HEK293T (cell line): ENCODE measurements at regions of chr14 and their contacts with region 1.

Region 1: DNA sequence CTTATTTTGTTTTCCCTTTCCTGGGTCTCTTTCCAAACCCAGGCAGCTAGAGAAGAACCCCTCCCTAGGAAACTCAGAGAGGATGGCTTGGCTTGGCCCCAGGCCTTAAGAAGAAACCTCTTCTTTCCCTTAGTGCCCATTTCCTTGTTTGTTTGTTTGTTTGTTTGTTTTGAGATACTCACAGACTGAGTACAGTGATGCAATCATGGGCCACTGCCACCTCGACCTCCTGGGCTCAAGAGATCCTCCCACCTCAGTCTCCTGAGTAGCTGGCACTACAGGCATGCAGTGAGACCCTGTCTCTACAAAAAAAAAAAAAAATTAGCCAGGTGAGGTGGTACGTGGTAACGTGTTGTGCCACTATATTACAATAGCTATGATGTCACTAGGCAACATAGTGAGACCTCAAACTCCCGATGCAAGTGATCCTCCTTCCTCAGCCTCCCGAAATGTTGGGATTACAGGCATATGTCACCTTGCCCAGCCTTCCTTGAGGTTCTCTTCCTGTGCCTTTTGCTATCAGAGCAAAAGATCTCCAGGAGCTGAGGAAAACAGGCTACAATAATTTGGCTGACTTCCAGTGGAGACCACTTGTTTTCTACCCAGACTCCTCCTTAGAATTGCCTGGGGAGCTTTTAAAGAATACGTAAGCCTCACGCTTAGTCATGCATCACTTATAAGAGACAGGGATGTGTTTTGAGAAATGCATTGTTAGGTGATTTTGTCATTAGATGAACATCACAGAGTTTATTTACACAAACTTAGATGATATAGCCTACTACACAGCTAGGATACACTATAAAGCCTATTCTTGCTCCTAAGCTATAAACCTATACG is 34.5 kb upstream of the LGALS3 start:
- DNase-seq: no peak

Region 2: DNA sequence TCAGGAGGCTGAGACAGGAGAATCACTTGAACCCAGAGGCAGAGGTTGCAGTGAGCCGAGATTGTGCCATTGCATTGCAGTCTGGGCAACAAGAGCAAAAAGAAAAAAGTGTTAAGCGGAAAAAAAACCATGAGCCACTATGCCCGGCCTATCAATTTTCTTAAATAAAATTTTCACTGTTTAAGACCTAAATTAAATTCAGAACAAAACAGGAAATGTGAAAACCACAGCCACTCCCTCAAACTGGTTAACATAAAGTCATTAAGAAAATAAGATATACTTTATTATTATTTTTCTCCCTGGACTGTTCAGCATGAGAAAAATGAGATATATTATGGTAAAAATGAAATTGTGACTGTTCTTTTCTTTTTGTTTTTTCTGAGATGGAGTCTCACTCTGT is 147.3 kb before region 1 on chr14:
- CTCF ChIA-PET with region 1: no interaction called
- POLR2A ChIA-PET with region 1: no interaction called
- DNase-seq: no peak

Region 3: DNA sequence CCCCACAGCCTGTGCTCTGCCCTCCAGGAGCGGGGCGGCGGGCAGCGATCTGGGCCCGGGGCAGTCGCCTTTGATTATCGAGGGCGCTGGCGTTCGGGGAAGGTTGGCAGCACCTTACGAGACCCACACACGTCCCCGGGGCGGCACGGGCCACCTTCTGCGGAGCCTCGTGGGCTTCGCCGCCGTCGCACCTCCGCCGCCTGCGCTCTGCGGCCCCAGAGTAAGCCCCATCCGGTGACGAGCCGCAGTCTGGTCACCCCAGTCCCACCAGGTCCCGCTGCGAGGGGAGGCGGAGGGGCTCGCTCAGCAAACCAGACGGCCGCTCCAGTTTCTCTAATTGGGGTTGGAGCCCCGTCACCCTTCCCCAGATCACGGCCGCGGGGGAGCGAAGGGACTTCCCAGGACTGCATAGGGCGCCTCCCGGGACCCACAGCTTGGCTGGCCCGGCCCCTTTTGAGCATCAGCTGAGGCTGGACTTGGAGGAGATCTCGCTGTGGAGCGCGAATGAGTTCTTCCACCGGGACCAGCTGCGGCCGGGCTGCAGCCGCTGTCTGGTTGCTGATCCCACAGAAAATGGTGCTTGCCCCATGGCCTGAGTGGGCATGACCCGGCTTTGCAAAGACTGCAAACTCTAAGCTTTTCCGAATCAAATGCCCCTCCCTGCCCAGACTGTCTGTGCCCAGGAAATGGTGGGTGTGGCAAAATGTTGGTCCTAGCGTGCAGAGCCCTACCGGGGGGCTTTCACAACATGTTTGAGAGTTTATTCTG is 35.1 kb after region 1 on chr14:
- CTCF ChIA-PET with region 1: no interaction called
- POLR2A ChIA-PET with region 1: no interaction called
- DNase-seq: no peak

Region 4: DNA sequence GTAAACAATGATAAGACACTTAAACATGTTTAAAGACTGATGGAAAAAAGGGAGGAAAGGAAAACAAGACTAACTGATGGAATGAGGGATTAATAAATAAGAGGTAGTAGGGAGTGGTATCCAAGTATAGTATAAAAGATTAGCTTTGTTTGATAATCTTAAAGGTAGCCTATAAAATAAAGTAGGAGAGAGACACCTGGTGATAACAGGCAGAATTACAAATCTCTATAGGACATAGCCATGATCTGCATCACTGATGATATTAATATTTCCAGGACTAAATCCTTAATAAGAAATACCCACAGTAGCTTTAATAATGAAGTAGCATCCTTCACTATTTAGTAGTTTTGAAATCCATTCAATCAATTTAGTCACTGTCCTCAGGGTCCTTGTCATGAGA is 66.5 kb after region 1 on chr14:
- CTCF ChIA-PET with region 1: interaction called, 17 read pairs
- POLR2A ChIA-PET with region 1: no interaction called
- DNase-seq: no peak

Region 5: GRCh38 chr14:55238019-55238680 is 143.6 kb after region 1 on chr14:
- CTCF ChIA-PET with region 1: no interaction called
- POLR2A ChIA-PET with region 1: no interaction called
- DNase-seq: no peak

Region 6: GRCh38 chr14:56181681-56182085 is 1087.1 kb after region 1 on chr14:
- CTCF ChIA-PET with region 1: interaction called, 10 read pairs
- POLR2A ChIA-PET with region 1: no interaction called
- DNase-seq: no peak